ENCODE measurements at regions of chr10 and their contacts with region 1.

Region 1: DNA sequence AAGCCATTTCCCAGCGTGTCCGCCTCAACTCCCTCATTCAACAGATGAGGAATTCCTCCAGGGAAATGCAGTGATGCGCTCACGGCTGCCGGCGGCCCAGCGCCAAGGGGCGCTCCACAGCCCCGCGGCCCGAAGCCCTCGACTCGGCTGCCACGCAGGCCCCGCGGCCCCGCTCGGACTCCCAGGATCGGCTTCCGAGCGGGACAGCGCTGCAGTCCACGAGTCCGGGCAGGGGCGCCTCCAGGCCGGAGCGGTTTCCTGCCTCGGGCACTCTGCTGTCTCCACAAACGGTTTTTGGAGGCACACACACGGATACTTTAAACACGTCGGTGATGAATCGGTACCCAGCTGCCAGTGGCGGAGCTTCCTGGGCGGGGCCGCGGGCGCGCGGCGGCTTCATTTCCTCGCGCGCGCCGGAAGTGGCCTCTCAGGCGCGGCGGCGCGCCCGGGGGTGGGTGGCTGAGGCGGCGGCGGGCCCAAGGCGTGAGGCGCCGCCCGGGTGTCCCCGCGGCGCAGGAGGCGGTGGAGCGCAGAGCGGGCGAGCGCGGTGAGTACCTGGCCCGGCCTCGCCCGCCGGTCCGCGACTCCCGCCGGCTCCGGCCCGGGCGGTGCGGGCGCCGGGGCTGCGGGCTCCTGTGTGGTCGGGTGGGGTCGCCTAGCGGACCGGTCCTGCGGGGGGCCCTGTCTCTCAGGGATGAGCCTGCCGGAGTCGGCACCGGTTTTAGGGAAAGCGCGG is at the start of gene CSGALNACT2:
- DNase-seq: peak; percentile 88
- H3K4me3 Mint-ChIP-seq: peak within 1 kb of the TSS; percentile 97
- H3K27ac Mint-ChIP-seq: peak within 1 kb of the TSS; percentile 99
- H3K4me1 Mint-ChIP-seq: peaks cover 51% of the 10 kb centered on the region
- H3K27me3 Mint-ChIP-seq: no peaks in the 10 kb centered on the region
- total RNA-seq, gene CSGALNACT2: 25.6 to 27.1 TPM

Region 2: GRCh38 chr10:42801135-42801534 is 337.1 kb before region 1 on chr10:
- CTCF ChIA-PET with region 1: no interaction called
- intact Hi-C with region 1: loop called (anchors 1 kb)
- DNase-seq: peak; percentile 27
- H3K4me3 Mint-ChIP-seq: no peak overlapping the region
- H3K27ac Mint-ChIP-seq: peak overlapping the region; percentile 46
- H3K4me1 Mint-ChIP-seq: peaks cover 28% of the 10 kb centered on the region
- H3K27me3 Mint-ChIP-seq: no peaks in the 10 kb centered on the region

Region 3: GRCh38 chr10:43160046-43160918 is 22.1 kb after region 1 on chr10:
- CTCF ChIA-PET with region 1: no interaction called
- intact Hi-C with region 1: loop called (anchors 1 kb)
- DNase-seq: peak; percentile 57
- H3K4me3 Mint-ChIP-seq: no peak overlapping the region
- H3K27ac Mint-ChIP-seq: peak overlapping the region; percentile 79
- H3K4me1 Mint-ChIP-seq: peaks cover 49% of the 10 kb centered on the region
- H3K27me3 Mint-ChIP-seq: no peaks in the 10 kb centered on the region

Region 4: DNA sequence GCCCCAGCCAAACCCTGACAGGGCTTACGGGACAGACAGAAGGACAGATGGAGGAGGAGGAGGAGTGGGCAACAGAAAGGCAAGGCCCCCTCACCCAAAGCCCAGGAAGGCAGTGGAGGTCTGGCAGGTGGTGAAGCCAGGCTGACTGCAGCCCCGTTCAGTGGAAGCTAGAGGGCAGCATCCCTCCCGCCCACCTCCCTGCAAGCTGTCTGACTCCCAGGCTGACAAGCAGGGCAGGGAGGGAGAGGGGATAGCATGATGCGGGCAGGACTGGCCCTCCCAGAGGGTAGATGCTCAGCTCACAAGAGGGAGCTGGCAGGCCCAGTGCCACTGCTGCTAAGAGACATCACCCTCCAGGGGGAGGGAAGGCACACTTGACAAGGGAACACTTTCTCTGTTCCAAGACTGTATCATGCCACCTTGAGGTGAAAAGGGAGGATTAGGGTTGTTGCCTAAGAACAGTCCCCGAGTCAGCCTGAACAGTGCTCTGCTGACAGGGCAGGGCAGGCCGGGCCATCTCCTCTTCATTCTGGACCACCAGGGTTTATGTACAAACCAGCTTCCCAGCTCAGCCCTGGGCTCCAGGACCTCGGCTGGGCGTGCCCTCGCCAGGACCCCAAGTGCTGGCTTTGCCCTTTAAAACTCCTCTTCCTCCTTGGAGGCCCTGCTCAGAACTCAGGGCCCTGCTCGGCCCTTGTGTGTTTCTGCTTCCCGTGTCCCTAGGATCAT is 66.9 kb after region 1 on chr10:
- CTCF ChIA-PET with region 1: interaction called, 5 read pairs
- intact Hi-C with region 1: loop called (anchors 1 kb)
- DNase-seq: peak; percentile 73
- H3K4me3 Mint-ChIP-seq: no peak overlapping the region
- H3K27ac Mint-ChIP-seq: no peak overlapping the region
- H3K4me1 Mint-ChIP-seq: peaks cover 4% of the 10 kb centered on the region
- H3K27me3 Mint-ChIP-seq: no peaks in the 10 kb centered on the region

Region 5: GRCh38 chr10:43361986-43362839 is 224.0 kb after region 1 on chr10:
- CTCF ChIA-PET with region 1: no interaction called
- intact Hi-C with region 1: loop called (anchors 2 kb)
- DNase-seq: peak; percentile 98
- H3K4me3 Mint-ChIP-seq: peak overlapping the region; percentile 95
- H3K27ac Mint-ChIP-seq: peak overlapping the region; percentile 96
- H3K4me1 Mint-ChIP-seq: peaks cover 23% of the 10 kb centered on the region
- H3K27me3 Mint-ChIP-seq: no peaks in the 10 kb centered on the region

Region 6: DNA sequence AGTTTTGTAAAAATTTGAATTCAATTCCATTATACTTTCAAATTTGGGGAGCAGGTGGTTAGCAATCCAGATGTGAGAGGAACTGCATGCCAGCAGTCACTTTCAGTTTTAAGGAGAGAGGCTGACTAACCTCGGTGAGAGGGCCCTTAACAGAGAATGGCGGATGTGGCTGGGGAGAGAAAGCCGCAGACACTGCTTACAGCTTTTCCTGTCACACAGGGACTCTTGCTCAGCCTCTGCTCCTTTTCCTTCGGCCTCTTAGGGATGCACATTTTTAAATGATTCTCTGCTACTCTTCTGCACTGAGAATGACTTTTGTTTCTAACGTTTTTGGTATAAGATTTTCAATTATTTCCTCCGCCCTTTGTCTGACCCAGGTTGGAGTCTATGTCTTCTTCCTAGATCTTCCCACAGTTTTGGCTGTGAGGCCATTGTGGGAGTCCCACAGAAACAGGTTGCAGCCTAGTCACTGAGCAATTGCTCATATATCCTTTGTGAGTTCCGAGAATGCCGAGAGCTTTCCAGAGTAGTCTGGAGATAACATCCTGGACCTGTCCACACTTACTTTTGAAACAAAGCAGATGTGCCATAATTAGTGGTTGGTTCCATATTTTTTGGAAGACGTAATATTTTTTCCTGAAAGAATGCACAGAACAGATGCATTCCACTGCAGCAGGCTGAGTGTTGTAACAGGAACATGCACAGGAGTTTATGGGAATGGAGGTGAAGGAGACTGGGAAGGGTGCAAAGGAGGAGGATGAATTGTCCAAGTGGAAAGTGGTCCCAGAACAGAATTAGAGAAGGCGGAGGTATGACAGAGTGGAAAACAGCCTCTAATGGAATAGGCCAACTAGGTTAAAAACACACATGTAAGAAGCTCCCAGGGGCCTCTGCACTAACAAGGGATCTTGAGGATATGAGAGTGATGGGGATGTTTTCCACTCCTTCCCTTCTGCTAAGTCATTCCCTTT is 678.4 kb after region 1 on chr10:
- CTCF ChIA-PET with region 1: no interaction called
- intact Hi-C with region 1: loop called (anchors 10 kb)
- DNase-seq: peak; percentile 93
- H3K4me3 Mint-ChIP-seq: peak overlapping the region; percentile 8
- H3K27ac Mint-ChIP-seq: peak overlapping the region; percentile 57
- H3K4me1 Mint-ChIP-seq: peaks cover 37% of the 10 kb centered on the region
- H3K27me3 Mint-ChIP-seq: no peaks in the 10 kb centered on the region